Activated CD4-positive, alpha-beta memory T cell treated with anti-CD3 and anti-CD28 coated beads for 36 hours (primary cell): ENCODE measurements at regions of chr6 and their contacts with region 1.

Region 1: GRCh38 chr6:5302995-5303622 is 41.8 kb downstream of the FARS2 start:
- DNase-seq: peak; percentile 81
- H3K4me3 Mint-ChIP-seq: peak overlapping the region; percentile 59
- H3K27ac Mint-ChIP-seq: peak overlapping the region; percentile 87
- H3K4me1 Mint-ChIP-seq: peaks cover 57% of the 10 kb centered on the region
- H3K27me3 Mint-ChIP-seq: no peaks in the 10 kb centered on the region

Region 2: DNA sequence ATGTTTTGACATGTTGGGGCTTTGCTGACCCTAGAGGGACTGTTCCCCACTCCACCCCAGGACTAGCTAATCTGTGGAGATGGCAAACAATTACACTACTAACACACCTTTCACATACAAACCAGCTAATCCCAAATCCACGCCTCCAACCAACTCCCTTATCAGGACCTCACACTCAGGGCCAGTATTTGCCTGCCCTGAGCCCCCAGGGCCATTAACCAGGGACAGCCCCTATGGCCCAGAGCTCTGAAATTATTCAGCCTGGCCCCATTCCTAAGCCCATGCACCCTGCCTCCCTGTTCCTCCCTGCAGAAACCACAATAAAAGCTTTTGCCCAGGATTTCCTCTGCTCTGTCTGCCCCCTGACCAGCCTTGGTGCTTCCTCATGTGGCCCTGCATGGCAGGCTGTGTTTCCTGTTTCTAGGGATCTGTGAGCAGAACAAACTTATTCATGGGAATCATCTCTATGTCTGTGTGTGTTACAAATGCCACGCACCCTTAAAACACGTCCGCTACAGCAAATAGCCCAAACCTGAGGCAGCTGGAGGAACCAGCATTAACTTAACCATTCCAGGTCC is 1672.8 kb before region 1 on chr6:
- CTCF ChIA-PET with region 1: no interaction called
- POLR2A ChIA-PET with region 1: no interaction called
- intact Hi-C with region 1: no loop called
- DNase-seq: no peak
- H3K4me3 Mint-ChIP-seq: no peak overlapping the region
- H3K27ac Mint-ChIP-seq: no peak overlapping the region
- H3K4me1 Mint-ChIP-seq: no peaks in the 10 kb centered on the region
- H3K27me3 Mint-ChIP-seq: peaks cover 24% of the 10 kb centered on the region

Region 3: DNA sequence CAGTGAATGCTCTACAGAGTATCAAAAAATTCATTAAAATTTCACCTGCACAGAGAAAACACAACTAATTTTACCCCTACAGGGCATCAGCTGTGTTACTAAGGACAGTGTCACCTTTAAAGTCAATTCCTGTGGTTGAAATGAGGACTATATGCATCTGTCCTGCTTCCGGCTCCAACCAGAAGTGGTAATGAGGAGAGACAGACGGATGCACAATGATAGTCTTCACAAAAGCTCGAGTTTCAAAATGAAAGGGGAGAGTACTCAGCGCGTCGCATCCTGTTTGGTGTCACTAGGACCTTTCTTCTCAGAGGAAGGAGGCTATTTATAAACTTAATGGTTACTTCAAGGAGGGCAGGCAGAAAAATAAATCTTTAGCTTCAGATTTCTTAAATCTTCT is 128.9 kb before region 1 on chr6:
- CTCF ChIA-PET with region 1: interaction called, 16 read pairs
- POLR2A ChIA-PET with region 1: no interaction called
- intact Hi-C with region 1: loop called (anchors 1 kb)
- DNase-seq: peak; percentile 78
- H3K4me3 Mint-ChIP-seq: peak overlapping the region; percentile 27
- H3K27ac Mint-ChIP-seq: peak overlapping the region; percentile 71
- H3K4me1 Mint-ChIP-seq: peaks cover 40% of the 10 kb centered on the region
- H3K27me3 Mint-ChIP-seq: no peaks in the 10 kb centered on the region

Region 4: DNA sequence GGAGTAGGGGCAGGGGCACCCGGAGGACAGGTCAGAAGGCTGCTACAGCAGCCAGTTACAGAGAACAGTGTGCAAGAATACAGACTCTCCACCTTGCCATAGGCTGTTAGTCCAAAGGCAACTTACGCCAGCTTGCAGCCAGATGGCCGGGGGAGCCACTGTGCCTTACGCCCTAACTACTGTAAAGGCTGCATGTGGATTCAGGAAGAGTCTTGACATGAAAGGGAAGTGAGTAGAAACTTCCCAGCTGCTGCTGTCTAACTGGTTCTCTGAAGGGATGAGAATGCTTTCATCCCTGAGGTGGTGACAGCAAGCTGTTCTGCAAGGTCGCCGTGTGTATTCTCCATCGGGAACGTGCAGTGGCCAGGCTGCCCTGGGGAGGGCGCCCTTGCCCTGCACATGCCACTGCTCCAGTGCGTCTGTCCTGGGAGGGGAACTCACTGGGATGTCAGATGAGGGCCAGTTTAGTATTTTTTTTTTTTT is 88.5 kb before region 1 on chr6:
- CTCF ChIA-PET with region 1: interaction called, 32 read pairs
- POLR2A ChIA-PET with region 1: no interaction called
- intact Hi-C with region 1: loop called (anchors 1 kb)
- DNase-seq: peak; percentile 58
- H3K4me3 Mint-ChIP-seq: no peak overlapping the region
- H3K27ac Mint-ChIP-seq: no peak overlapping the region
- H3K4me1 Mint-ChIP-seq: peaks cover 4% of the 10 kb centered on the region
- H3K27me3 Mint-ChIP-seq: no peaks in the 10 kb centered on the region

Region 5: DNA sequence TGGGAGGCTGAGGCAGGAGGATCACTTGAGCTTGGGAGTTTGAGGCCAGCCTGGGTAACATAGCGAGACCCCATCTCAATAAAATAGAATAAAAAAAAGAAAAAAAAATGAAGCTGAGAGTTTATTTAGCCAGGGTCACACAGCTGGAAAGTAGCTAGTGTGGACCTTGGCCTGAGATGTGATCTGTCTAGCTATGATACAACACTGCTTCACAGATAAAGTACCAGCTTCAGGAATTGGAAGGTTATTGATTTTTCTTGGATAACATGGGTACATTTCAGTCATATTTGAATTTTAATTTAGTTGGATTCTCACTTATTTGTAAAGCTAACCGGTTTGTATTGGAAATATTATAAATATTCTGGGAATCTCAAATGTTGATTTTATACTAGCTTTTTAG is 36.7 kb before region 1 on chr6:
- CTCF ChIA-PET with region 1: interaction called, 50 read pairs
- POLR2A ChIA-PET with region 1: interaction called, 30 read pairs
- intact Hi-C with region 1: loop called (anchors 1 kb)
- DNase-seq: no peak
- H3K4me3 Mint-ChIP-seq: no peak overlapping the region
- H3K27ac Mint-ChIP-seq: peak overlapping the region; percentile 25
- H3K4me1 Mint-ChIP-seq: peaks cover 38% of the 10 kb centered on the region
- H3K27me3 Mint-ChIP-seq: no peaks in the 10 kb centered on the region

Region 6: GRCh38 chr6:5290500-5290899 is 12.6 kb before region 1 on chr6:
- CTCF ChIA-PET with region 1: interaction called, 18 read pairs
- POLR2A ChIA-PET with region 1: interaction called, 8 read pairs
- intact Hi-C with region 1: no loop called
- DNase-seq: no peak
- H3K4me3 Mint-ChIP-seq: no peak overlapping the region
- H3K27ac Mint-ChIP-seq: no peak overlapping the region
- H3K4me1 Mint-ChIP-seq: peaks cover 64% of the 10 kb centered on the region
- H3K27me3 Mint-ChIP-seq: no peaks in the 10 kb centered on the region

Region 7: DNA sequence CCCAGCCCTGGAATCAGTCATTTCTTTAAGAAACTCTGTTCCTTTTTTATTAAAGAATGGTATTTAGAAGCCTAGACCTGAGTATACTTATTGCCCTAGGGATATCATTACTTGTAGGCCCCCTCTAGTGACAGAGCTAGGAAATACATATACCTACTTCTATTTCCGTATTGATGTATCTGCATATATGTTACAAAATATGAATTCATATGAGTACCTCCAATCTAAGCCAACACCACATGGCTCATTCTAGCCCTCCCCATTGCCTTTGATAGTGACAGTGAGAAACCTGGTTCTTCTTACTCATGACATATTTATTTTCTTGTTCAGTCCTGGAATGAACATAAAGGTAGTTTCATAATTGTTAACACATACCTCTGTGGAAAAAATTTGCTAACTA is 95.4 kb after region 1 on chr6:
- CTCF ChIA-PET with region 1: interaction called, 4 read pairs
- POLR2A ChIA-PET with region 1: interaction called, 3 read pairs
- intact Hi-C with region 1: loop called (anchors 1 kb)
- DNase-seq: peak; percentile 60
- H3K4me3 Mint-ChIP-seq: no peak overlapping the region
- H3K27ac Mint-ChIP-seq: no peak overlapping the region
- H3K4me1 Mint-ChIP-seq: peaks cover 35% of the 10 kb centered on the region
- H3K27me3 Mint-ChIP-seq: no peaks in the 10 kb centered on the region

Region 8: DNA sequence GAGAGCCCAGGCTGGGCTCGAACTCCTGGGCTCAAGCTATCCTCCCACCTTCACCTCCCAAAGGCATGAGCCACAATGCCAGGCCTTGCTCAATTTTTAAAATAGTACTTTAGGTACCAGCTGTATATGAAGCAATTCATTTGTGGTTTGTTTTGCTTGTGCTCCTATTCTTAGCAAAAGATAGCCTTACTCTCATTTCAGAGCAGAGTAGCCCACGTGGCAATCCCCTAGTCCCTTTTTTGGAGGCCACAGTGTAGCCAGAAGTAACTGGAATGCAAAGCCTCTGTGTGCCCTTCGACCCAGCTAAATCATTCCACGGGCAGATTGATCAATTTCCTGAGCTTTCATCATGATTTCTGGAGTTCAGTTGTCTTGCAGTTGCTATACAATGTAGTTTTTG is 331.4 kb after region 1 on chr6:
- CTCF ChIA-PET with region 1: no interaction called
- POLR2A ChIA-PET with region 1: no interaction called
- intact Hi-C with region 1: no loop called
- DNase-seq: no peak
- H3K4me3 Mint-ChIP-seq: no peak overlapping the region
- H3K27ac Mint-ChIP-seq: no peak overlapping the region
- H3K4me1 Mint-ChIP-seq: peaks cover 5% of the 10 kb centered on the region
- H3K27me3 Mint-ChIP-seq: no peaks in the 10 kb centered on the region